ENCODE measurements at regions of chr10 and their contacts with region 1.

Region 1: GRCh38 chr10:106625751-106626150 is 538.8 kb downstream of the SORCS1 start:
- DNase-seq: no peak
- ATAC-seq: no peak
- H3K4me3 ChIP-seq: no peak overlapping the region
- H3K27ac ChIP-seq: no peak overlapping the region
- H3K4me1 ChIP-seq: peaks cover 0 to 6% (median 0%) of the 10 kb centered on the region in 9 donors
- H3K27me3 ChIP-seq: no peaks in the 10 kb centered on the region
- CTCF ChIP-seq: no peak

Region 2: GRCh38 chr10:106682175-106682574 is 56.4 kb after region 1 on chr10:
- intact Hi-C with region 1: loop called in 6 of 10 experiments (anchors 2 to 10 kb)
- DNase-seq: no peak
- ATAC-seq: no peak
- H3K4me3 ChIP-seq: no peak overlapping the region
- H3K27ac ChIP-seq: no peak overlapping the region
- H3K4me1 ChIP-seq: peaks cover 0 to 7% (median 0%) of the 10 kb centered on the region in 9 donors
- H3K27me3 ChIP-seq: no peaks in the 10 kb centered on the region
- CTCF ChIP-seq: peak in 6 of 9 donors; percentile 6 to 48 (median 40)

Region 3: GRCh38 chr10:107434854-107435253 is 809.1 kb after region 1 on chr10:
- intact Hi-C with region 1: loop called in 1 of 10 experiments (anchors 5 kb)
- DNase-seq: no peak
- ATAC-seq: no peak
- H3K4me3 ChIP-seq: no peak overlapping the region
- H3K27ac ChIP-seq: no peak overlapping the region
- H3K4me1 ChIP-seq: no peaks in the 10 kb centered on the region
- H3K27me3 ChIP-seq: no peaks in the 10 kb centered on the region
- CTCF ChIP-seq: no peak

Region 4: DNA sequence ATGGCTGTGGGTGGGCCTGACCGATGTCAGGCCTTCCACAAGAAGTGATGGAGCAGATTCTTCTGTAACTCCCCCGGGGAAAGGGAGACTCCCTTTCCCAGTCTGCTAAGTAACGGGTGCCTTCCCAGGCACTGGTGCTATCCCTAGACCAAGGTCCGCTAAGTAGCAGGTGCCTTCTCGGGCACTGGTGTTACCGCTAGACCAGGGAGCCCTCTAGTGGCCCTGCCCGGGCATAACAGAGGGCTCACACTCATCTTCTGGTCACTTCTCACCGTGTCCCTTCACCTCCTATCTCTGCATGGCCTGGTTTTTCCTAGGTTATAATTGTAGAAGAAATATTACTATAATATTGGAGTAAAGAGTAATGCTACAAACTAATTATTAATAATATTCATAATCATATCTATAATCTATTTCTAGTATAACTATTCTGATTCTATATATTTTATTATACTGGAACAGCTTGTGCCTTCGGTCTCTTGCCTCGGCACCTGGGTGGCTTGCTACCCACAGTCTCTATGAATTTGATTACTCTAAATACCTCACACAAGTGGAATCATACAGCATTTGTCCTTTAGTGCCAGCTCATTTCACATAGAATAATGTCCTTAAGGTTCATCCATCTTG is 1918.9 kb after region 1 on chr10:
- intact Hi-C with region 1: loop called in 1 of 10 experiments (anchors 10 kb)
- DNase-seq: peak in 1 of 2 donors; percentile 47
- ATAC-seq: peak in 1 of 8 donors; percentile 73
- H3K4me3 ChIP-seq: no peak overlapping the region
- H3K27ac ChIP-seq: no peak overlapping the region
- H3K4me1 ChIP-seq: no peaks in the 10 kb centered on the region
- H3K27me3 ChIP-seq: peaks cover 0 to 3% (median 0%) of the 10 kb centered on the region in 7 donors
- CTCF ChIP-seq: peak; percentile 28 to 94 (median 75)